Cardiac septum (tissue), 1 donor: ENCODE measurements at regions of chr14 and their contacts with region 1.

Region 1: DNA sequence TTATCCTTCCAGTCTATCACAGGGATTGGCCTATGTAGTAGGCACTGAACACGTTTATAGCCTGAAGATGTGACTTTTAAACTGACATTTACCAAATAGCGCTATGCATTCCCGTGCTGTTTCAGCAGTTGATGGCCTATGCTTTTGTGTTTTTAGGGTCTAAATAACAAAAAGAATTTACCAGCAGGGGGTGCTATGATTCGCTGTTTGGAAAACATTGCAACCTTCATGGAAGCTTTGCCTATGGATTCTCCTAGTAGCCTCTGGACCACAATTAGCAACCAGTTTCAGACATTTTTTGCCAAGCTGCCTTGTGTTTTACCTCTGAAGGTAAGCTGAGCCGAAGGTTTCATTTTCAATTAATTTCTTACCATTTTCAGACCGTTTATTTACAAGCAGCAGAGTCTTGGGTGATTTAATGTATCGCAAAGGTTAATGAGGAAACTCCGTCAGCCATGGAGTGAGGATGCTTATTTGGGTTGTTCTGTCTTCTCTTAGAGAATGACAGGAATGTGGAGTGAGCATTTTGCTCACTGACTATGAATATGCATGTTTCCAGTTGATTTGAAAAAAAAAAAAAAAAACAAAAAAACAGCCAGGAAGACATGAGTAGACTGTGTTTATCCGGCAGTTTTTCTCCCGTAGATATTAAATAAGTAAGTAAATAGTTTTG is 133.1 kb downstream of the PRIMA1 start:
- DNase-seq: no peak

Region 2: DNA sequence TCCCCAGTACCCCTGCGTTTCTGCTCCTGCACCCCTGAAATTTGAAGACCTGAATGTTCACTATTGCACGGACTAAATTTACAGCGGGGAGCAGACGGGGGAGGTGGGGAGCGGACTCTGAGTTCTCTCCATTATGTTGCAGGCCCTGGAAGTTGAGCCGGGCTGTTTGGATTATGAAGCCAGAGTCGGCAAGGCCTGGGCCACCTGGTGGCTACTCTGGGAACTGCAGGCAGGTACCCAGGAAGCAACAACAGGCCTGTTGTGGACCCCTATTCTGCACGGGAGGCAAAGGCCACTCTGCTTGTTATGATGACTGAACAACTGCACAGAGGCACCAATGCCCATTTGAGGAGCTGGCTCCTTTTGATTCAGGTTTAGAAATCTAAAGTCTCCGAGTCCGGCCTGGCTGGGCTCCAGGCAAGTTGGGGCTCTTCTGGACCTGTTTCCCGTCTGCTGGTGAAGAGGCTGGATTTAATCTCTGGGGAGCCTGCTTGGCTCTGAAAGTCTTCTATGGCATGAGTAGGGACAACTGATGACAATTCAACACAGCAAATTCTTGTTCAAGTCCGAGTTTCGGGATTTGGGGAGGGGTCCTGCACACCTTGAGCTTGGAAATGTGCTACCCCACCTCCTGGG is 237.8 kb after region 1 on chr14:
- intact Hi-C with region 1: loop called (anchors 2 kb)
- DNase-seq: peak; percentile 82